Psoas muscle (tissue), 8 donors: ENCODE measurements at regions of chr4 and their contacts with region 1.

Region 1: GRCh38 chr4:10116580-10117358 is at the start of gene WDR1:
- DNase-seq: peak; percentile 98 to 99
- ATAC-seq: peak; percentile 93 to 97 (median 96)
- H3K4me3 ChIP-seq: peak within 1 kb of the TSS; percentile 90
- H3K27ac ChIP-seq: peak within 1 kb of the TSS; percentile 97
- H3K4me1 ChIP-seq: peaks cover 37% of the 10 kb centered on the region
- H3K27me3 ChIP-seq: no peaks in the 10 kb centered on the region
- CTCF ChIP-seq: no peak
- total RNA-seq, gene WDR1: 86.3 to 146 (median 118) TPM

Region 2: GRCh38 chr4:10079912-10080588 is 36.7 kb before region 1 on chr4:
- intact Hi-C with region 1: loop called in 1 of 2 experiments (anchors 5 kb)
- DNase-seq: no peak
- ATAC-seq: no peak
- H3K4me3 ChIP-seq: no peak overlapping the region
- H3K27ac ChIP-seq: no peak overlapping the region
- H3K4me1 ChIP-seq: peaks cover 12% of the 10 kb centered on the region
- H3K27me3 ChIP-seq: no peaks in the 10 kb centered on the region
- CTCF ChIP-seq: no peak